ENCODE measurements at regions of chr11 and their contacts with region 1.

Region 1: DNA sequence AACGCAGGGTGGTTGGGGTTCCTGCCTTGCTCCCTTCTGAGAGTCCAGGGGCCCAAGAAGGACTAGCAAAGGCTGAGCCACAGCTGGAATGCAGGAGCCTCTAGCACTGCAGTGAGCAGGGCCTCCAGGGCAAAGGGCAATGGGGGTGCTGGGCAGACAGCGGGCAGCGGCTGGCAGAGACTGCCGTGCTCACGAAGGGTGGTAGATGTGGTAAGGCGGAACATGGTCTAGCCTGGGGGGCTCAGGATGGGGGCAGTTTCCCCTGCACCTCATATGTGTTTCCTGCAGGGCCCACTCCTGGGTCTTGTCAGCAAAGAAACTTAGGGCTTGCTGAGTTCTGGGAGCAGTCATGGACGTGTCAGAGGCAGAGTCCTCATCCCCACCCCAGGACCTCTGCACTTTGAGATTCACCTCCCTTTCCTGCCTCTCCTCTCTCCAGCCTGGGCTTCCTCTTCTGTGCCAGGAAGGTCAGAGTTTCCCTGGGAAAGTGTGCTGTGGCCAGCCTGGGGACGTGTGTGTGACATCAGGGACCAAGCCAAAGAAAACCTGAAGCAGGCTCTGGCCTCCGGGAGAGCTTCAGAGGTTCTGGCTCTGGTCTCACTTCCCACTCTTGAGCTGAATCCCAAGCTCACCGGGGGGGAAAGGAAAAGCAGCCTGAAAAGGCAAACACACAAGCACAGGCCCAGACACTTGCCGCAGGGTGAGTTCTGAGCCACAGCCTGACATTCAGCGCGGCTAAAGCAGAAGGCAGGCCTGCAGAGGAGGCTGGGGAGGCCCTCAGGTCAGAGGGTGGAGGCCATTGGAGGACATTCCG is 4.4 kb downstream of the MOGAT2 start:
- DNase-seq: no peak
- ATAC-seq: no peak
- H3K4me3 ChIP-seq: no peak overlapping the region
- H3K4me3 Mint-ChIP-seq: no peak overlapping the region
- H3K27ac ChIP-seq: no peak overlapping the region
- H3K27ac Mint-ChIP-seq: no peak overlapping the region
- H3K4me1 ChIP-seq: no peaks in the 10 kb centered on the region
- H3K4me1 Mint-ChIP-seq: no peaks in the 10 kb centered on the region
- H3K27me3 ChIP-seq: no peaks in the 10 kb centered on the region
- H3K27me3 Mint-ChIP-seq: no peaks in the 10 kb centered on the region
- CTCF ChIP-seq: no peak

Region 2: GRCh38 chr11:75986966-75987365 is 264.9 kb after region 1 on chr11:
- CTCF ChIA-PET with region 1: no interaction called
- POLR2A ChIA-PET with region 1: no interaction called
- intact Hi-C with region 1: loop called (anchors 5 kb)
- DNase-seq: no peak
- ATAC-seq: no peak
- H3K4me3 ChIP-seq: no peak overlapping the region
- H3K4me3 Mint-ChIP-seq: no peak overlapping the region
- H3K27ac ChIP-seq: no peak overlapping the region
- H3K27ac Mint-ChIP-seq: no peak overlapping the region
- H3K4me1 ChIP-seq: no peaks in the 10 kb centered on the region
- H3K4me1 Mint-ChIP-seq: peaks cover 7% of the 10 kb centered on the region
- H3K27me3 ChIP-seq: no peaks in the 10 kb centered on the region
- H3K27me3 Mint-ChIP-seq: no peaks in the 10 kb centered on the region
- CTCF ChIP-seq: no peak

Region 3: DNA sequence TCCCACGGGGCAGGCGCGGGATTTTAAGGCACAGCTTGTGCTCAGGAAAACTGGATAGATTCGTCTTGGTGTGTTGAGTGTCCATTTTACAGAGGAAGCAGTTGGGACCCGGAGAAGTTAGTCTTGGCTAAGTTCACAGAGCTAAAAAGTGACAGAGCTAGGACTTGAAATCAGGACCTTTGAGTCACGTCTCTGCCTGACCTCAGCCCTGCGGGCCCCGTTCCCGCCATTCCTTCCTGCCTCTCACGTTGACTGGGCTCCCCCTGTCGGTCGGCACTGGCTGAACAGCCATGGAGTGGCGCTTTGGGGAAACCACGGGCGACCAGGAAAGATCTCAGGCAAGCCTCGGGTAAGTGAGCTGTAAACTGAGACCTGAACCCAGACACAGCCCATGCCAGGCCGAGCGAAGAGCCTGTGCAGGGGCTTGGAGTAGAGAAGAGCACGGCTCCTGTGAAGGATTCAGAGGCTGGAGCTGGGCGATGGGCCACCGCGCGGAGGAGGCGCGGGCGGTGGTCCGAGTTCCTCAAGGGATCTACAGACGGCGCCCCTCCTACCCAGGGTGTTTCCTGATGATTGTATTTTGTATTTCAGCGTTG is 430.1 kb after region 1 on chr11:
- CTCF ChIA-PET with region 1: interaction called, 3 read pairs
- POLR2A ChIA-PET with region 1: no interaction called
- intact Hi-C with region 1: loop called (anchors 10 kb)
- DNase-seq: peak; percentile 80
- ATAC-seq: peak; percentile 82
- H3K4me3 ChIP-seq: peak overlapping the region; percentile 15 to 55 (median 47)
- H3K4me3 Mint-ChIP-seq: peak overlapping the region; percentile 74
- H3K27ac ChIP-seq: no peak overlapping the region
- H3K27ac Mint-ChIP-seq: peak overlapping the region; percentile 21
- H3K4me1 ChIP-seq: peaks cover 18 to 21% of the 10 kb centered on the region in 2 donors
- H3K4me1 Mint-ChIP-seq: peaks cover 25% of the 10 kb centered on the region
- H3K27me3 ChIP-seq: no peaks in the 10 kb centered on the region
- H3K27me3 Mint-ChIP-seq: no peaks in the 10 kb centered on the region
- CTCF ChIP-seq: peak; percentile 93